Activated CD4-positive, alpha-beta T cell treated with anti-CD3 and anti-CD28 coated beads for 36 hours (primary cell): ENCODE measurements at regions of chr12 and their contacts with region 1.

Region 1: DNA sequence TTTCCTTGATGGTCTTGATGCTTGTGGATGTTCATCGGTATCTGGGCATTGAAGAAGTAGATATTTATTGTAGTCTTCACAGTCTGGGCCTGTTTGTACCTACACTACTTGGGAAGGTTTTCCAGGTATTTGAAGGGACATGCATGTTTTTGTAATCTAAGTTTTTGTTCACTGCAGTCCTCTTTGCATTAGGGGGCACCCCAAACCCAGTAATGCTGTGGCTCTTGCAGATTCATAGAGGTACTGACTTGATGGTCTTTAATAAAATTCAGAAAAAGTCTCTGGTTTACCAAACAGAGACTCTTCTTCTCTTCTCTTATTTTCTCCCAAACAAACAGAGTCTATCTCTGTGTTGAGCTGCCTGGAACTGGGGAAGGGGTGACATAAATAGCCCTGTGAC is 150.9 kb upstream of the SLC16A7 start:
- DNase-seq: peak; percentile 25
- ATAC-seq: no peak
- H3K4me3 Mint-ChIP-seq: no peak overlapping the region
- H3K27ac Mint-ChIP-seq: no peak overlapping the region
- H3K4me1 Mint-ChIP-seq: no peaks in the 10 kb centered on the region
- H3K27me3 Mint-ChIP-seq: peaks cover 2% of the 10 kb centered on the region

Region 2: DNA sequence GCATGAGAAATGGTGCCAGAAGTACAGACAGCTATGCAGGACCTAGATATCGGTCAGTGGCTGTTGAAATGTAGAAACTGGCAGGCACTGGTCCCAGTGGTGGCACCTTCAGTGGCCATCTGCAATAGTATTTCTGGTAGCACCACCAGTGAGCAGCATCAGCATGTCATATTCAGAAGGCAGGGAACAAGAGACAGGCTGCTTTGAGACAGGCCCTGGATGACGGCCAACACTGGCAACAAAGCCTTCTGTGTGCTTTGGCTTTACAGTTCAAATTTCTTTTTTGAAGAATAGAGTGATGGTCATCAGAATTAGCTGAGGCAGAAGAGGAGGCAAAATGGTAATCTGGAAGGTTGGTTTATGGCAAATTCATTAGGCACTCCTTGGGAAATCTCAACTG is 122.5 kb before region 1 on chr12:
- CTCF ChIA-PET with region 1: no interaction called
- POLR2A ChIA-PET with region 1: no interaction called
- intact Hi-C with region 1: no loop called
- DNase-seq: no peak
- ATAC-seq: no peak
- H3K4me3 Mint-ChIP-seq: no peak overlapping the region
- H3K27ac Mint-ChIP-seq: no peak overlapping the region
- H3K4me1 Mint-ChIP-seq: no peaks in the 10 kb centered on the region
- H3K27me3 Mint-ChIP-seq: no peaks in the 10 kb centered on the region

Region 3: GRCh38 chr12:59403259-59403932 is 41.5 kb before region 1 on chr12:
- CTCF ChIA-PET with region 1: no interaction called
- POLR2A ChIA-PET with region 1: no interaction called
- intact Hi-C with region 1: no loop called
- DNase-seq: peak; percentile 41
- ATAC-seq: peak; percentile 50
- H3K4me3 Mint-ChIP-seq: no peak overlapping the region
- H3K27ac Mint-ChIP-seq: no peak overlapping the region
- H3K4me1 Mint-ChIP-seq: peaks cover 9% of the 10 kb centered on the region
- H3K27me3 Mint-ChIP-seq: peaks cover 2% of the 10 kb centered on the region

Region 4: GRCh38 chr12:59808317-59808910 is 363.5 kb after region 1 on chr12:
- CTCF ChIA-PET with region 1: no interaction called
- POLR2A ChIA-PET with region 1: no interaction called
- intact Hi-C with region 1: loop called (anchors 5 kb)
- DNase-seq: no peak
- ATAC-seq: peak; percentile 70
- H3K4me3 Mint-ChIP-seq: no peak overlapping the region
- H3K27ac Mint-ChIP-seq: no peak overlapping the region
- H3K4me1 Mint-ChIP-seq: no peaks in the 10 kb centered on the region
- H3K27me3 Mint-ChIP-seq: no peaks in the 10 kb centered on the region

Region 5: DNA sequence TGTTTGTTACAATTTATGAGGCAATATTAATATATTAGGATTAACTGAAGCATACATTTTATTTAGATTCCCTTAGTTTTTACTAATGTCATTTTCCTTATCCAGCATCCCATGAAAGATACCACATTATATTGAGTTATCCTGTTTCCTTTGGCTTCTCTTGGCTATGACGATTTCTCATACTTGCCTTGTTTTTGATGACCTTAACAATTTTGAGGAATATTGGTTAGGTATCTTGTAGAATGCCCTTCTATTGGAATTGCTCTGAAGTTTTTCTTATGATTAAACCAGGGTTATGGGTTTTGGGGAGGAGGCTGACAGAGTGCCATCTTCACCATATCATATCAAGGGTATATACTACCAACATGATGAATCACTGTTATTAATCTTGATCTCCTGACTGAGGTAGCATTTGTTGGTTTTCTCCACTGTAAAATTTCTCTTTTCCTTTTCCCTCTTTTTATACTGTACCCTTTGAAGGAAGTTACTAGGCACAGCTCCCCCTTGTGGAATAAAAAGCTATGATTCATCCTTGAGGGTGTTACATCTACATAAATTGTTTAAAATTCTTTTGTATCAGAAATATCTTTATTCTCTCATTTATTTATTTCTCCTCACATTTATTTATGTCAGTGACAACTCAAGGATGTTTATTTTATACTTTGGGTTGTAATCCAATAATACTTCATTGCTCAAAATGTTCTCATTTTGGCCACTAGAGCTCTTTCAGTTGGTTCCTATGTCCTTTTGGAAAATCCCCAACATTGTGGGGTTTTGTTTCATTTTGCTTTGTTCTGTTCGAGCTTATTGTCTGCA is 389.9 kb after region 1 on chr12:
- CTCF ChIA-PET with region 1: interaction called, 10 read pairs
- POLR2A ChIA-PET with region 1: no interaction called
- intact Hi-C with region 1: loop called (anchors 1 to 10 kb)
- DNase-seq: no peak
- ATAC-seq: no peak
- H3K4me3 Mint-ChIP-seq: no peak overlapping the region
- H3K27ac Mint-ChIP-seq: no peak overlapping the region
- H3K4me1 Mint-ChIP-seq: no peaks in the 10 kb centered on the region
- H3K27me3 Mint-ChIP-seq: peaks cover 4% of the 10 kb centered on the region